Tibial artery (tissue), 4 donors: ENCODE measurements at regions of chr11 and their contacts with region 1.

Region 1: DNA sequence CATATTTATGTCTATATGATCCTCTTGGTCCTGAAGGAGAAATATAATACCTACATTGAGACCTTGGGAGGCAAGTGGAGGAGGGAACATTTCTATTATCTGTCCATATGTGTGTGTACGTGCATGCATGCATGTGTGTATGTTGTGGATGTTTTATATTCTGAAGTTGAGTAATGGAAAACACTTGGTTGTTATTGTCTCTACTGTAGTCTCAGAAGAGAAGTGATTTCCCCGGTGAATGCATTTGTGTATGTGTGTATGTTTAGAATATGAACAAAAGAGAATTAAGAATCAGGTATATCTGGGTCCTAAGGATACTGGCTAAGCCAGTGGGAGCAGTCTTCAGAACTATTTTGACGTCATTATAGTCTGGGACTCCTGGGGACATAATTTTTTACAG is at the start of gene OR52N1:
- DNase-seq: no peak
- H3K4me3 ChIP-seq: no peak within 1 kb of the TSS
- H3K27ac ChIP-seq: no peak within 1 kb of the TSS
- H3K4me1 ChIP-seq: no peaks in the 10 kb centered on the region
- H3K27me3 ChIP-seq: no peaks in the 10 kb centered on the region
- CTCF ChIP-seq: no peak

Region 2: GRCh38 chr11:5767056-5767455 is 24.1 kb before region 1 on chr11:
- intact Hi-C with region 1: loop called (anchors 1 kb)
- DNase-seq: no peak
- H3K4me3 ChIP-seq: no peak overlapping the region
- H3K27ac ChIP-seq: no peak overlapping the region
- H3K4me1 ChIP-seq: no peaks in the 10 kb centered on the region
- H3K27me3 ChIP-seq: no peaks in the 10 kb centered on the region
- CTCF ChIP-seq: no peak